Activated T-helper 2 cell treated with anti-CD3 and anti-CD28 coated beads, Interferon-gamma antibody, Interleukin-2, Interleukin-4, amounts not matched to agents 10 μg/mL and 5 μg/mL and 100 μg/mL, durations not matched to agents 14 hours and 24 hours and 36 hours (primary cell): ENCODE measurements at regions of chr2 and their contacts with region 1.

Region 1: DNA sequence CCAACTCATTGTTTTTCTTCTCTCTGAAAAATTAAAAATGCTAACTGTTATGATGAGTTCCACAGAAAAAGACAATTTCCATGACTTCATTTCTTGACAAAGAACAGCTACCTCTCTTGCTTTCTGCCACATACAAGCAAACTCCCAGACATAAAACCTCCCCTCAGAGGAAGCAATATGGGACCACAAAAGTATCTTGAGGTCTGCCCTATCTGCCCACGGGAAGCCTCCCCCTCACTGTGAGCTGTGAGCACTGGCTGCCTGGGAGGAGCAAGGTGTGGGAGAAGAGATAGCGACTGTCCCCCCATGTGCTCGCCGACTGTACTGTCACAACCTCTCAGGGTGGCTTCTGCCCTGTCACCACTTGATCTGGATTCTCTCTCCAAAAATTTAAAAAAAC is 69.7 kb upstream of the NRP2 start:
- DNase-seq: peak; percentile 41
- H3K4me3 Mint-ChIP-seq: peak overlapping the region; percentile 38
- H3K27ac Mint-ChIP-seq: peak overlapping the region; percentile 91
- H3K4me1 Mint-ChIP-seq: peaks cover 60% of the 10 kb centered on the region
- H3K27me3 Mint-ChIP-seq: no peaks in the 10 kb centered on the region

Region 2: DNA sequence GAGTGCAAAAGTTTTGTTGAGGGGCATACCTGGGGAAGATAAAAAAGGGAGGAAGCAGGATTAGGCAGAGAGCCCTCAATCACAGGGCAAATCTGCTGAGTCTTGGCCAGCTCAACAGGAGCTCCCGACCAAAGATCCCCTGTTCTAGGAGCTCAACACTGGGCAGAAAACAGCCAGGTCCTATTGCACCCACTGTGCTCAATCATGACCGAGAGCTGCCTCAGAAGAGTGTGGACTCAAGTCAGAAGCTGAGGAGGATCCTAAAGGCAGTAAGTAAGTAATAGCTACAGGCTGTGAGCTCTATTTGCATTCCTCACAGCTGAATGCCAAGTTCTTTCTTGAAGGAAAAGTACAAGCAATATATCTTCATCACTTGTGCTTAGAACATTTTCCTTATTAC is 264.7 kb before region 1 on chr2:
- intact Hi-C with region 1: no loop called
- DNase-seq: no peak
- H3K4me3 Mint-ChIP-seq: no peak overlapping the region
- H3K27ac Mint-ChIP-seq: no peak overlapping the region
- H3K4me1 Mint-ChIP-seq: no peaks in the 10 kb centered on the region
- H3K27me3 Mint-ChIP-seq: peaks cover 17% of the 10 kb centered on the region

Region 3: GRCh38 chr2:205543937-205544702 is 68.5 kb before region 1 on chr2:
- intact Hi-C with region 1: loop called (anchors 2 kb)
- DNase-seq: no peak
- H3K4me3 Mint-ChIP-seq: no peak overlapping the region
- H3K27ac Mint-ChIP-seq: peak overlapping the region; percentile 66
- H3K4me1 Mint-ChIP-seq: peaks cover 30% of the 10 kb centered on the region
- H3K27me3 Mint-ChIP-seq: peaks cover 4% of the 10 kb centered on the region

Region 4: GRCh38 chr2:205636549-205637319 is 24.1 kb after region 1 on chr2:
- intact Hi-C with region 1: loop called (anchors 1 kb)
- DNase-seq: peak; percentile 13
- H3K4me3 Mint-ChIP-seq: no peak overlapping the region
- H3K27ac Mint-ChIP-seq: peak overlapping the region; percentile 84
- H3K4me1 Mint-ChIP-seq: peaks cover 47% of the 10 kb centered on the region
- H3K27me3 Mint-ChIP-seq: no peaks in the 10 kb centered on the region

Region 5: GRCh38 chr2:205660521-205661124 is 48.0 kb after region 1 on chr2:
- intact Hi-C with region 1: loop called (anchors 2 kb)
- DNase-seq: peak; percentile 34
- H3K4me3 Mint-ChIP-seq: peak overlapping the region; percentile 27
- H3K27ac Mint-ChIP-seq: peak overlapping the region; percentile 63
- H3K4me1 Mint-ChIP-seq: peaks cover 54% of the 10 kb centered on the region
- H3K27me3 Mint-ChIP-seq: no peaks in the 10 kb centered on the region

Region 6: GRCh38 chr2:205700331-205701132 is 87.9 kb after region 1 on chr2:
- intact Hi-C with region 1: loop called (anchors 2 kb)
- DNase-seq: no peak
- H3K4me3 Mint-ChIP-seq: peak overlapping the region; percentile 51
- H3K27ac Mint-ChIP-seq: peak overlapping the region; percentile 84
- H3K4me1 Mint-ChIP-seq: peaks cover 58% of the 10 kb centered on the region
- H3K27me3 Mint-ChIP-seq: no peaks in the 10 kb centered on the region

Region 7: DNA sequence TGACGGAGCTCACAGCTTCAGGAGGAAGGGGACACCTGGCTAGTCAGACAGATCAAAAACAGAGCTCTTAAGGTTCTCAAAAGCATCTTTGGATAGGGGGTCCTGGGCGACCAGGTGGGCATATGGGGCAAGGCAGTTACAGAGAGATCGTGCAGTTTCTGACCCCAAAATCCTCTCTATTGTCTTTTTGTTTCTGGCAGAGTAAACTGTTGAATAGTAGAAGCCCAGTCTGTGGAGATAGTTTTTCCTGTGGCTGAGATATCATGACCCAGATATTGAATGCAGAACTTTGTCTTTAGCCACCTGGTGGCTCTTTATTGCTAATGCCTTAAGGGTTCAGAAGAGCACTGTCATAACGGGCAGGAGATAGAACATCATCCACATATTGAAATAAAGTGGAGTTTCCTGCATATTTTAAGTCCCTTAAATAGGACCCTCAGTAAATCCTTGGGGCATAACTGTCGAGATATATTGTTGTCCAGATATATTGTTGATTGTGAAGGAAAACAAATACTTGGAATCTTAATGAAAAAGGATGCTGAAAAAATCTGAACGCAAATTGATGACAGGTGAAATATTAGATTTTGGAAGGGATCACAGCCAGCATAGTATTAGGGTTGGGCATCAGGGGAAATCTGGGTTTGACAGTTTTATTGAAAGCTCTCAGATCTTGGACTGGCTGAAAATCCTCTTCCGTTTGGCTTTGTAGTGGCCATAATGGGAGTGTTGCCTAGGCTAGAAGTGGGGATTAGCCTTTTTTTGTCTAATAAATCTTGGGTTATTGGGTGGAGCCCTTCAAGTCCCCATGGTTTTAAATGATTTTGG is 647.8 kb after region 1 on chr2:
- intact Hi-C with region 1: no loop called
- DNase-seq: no peak
- H3K4me3 Mint-ChIP-seq: no peak overlapping the region
- H3K27ac Mint-ChIP-seq: no peak overlapping the region
- H3K4me1 Mint-ChIP-seq: peaks cover 6% of the 10 kb centered on the region
- H3K27me3 Mint-ChIP-seq: peaks cover 74% of the 10 kb centered on the region